ENCODE measurements at regions of chr6 and their contacts with region 1.

Region 1: GRCh38 chr6:79630883-79631692 is at the start of gene SH3BGRL2:
- DNase-seq: peak; percentile 83
- ATAC-seq: peak; percentile 92
- total RNA-seq, gene SH3BGRL2: 7.9 TPM

Region 2: GRCh38 chr6:79672631-79673111 is 41.6 kb after region 1 on chr6:
- intact Hi-C with region 1: loop called (anchors 5 kb)
- DNase-seq: no peak
- ATAC-seq: no peak

Region 3: GRCh38 chr6:79802657-79803300 is 171.7 kb after region 1 on chr6:
- intact Hi-C with region 1: no loop called
- DNase-seq: no peak
- ATAC-seq: no peak

Measured in Right ventricle myocardium inferior (tissue), 1 donor.